ENCODE measurements at regions of chr3 and their contacts with region 1.

Region 1: GRCh38 chr3:4826237-4827100 is 152.8 kb upstream of the BHLHE40 start:
- DNase-seq: peak; percentile 86 to 95 (median 88)
- ATAC-seq: peak; percentile 85 to 93 (median 89)
- H3K4me3 ChIP-seq: peak overlapping the region in 5 of 12 donors; percentile 3 to 16 (median 10)
- H3K27ac ChIP-seq: peak overlapping the region; percentile 71 to 93 (median 84)
- H3K4me1 ChIP-seq: peaks cover 7 to 76% (median 40%) of the 10 kb centered on the region in 12 donors
- H3K27me3 ChIP-seq: no peaks in the 10 kb centered on the region
- CTCF ChIP-seq: no peak
- POLR2A ChIP-seq: peak in 1 of 2 donors; percentile 54

Region 2: DNA sequence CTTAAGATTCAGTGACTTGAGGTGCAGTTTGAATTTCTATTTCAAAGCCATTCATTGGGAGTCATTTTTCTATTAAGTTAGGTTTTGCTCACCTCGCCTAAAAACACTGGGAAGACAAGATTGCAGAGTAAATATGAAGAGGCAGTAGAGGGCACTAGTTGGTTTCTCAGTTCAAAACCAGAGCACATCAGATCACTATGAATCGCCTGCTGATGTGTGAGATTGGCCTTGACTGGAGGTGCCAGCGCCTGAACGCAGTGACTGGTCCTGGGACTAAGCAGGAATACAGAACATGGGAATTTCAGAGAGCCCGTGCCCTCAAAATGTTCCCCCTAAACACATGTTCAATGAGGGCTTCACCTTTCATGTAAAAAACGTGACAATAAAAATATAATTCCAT is 104.4 kb before region 1 on chr3:
- intact Hi-C with region 1: loop called in 5 of 10 experiments (anchors 5 to 10 kb)
- DNase-seq: peak in 2 of 5 donors; percentile 56 to 60
- ATAC-seq: peak; percentile 59 to 83 (median 74)
- H3K4me3 ChIP-seq: no peak overlapping the region
- H3K27ac ChIP-seq: peak overlapping the region in 9 of 12 donors; percentile 12 to 73 (median 58)
- H3K4me1 ChIP-seq: peaks cover 0 to 66% (median 41%) of the 10 kb centered on the region in 12 donors
- H3K27me3 ChIP-seq: no peaks in the 10 kb centered on the region
- CTCF ChIP-seq: peak in 10 of 12 donors; percentile 37 to 62 (median 48)
- POLR2A ChIP-seq: no peak

Region 3: GRCh38 chr3:4741404-4742307 is 84.8 kb before region 1 on chr3:
- intact Hi-C with region 1: loop called in 2 of 10 experiments (anchors 5 kb)
- DNase-seq: peak in 4 of 5 donors; percentile 59 to 79 (median 72)
- ATAC-seq: peak; percentile 73 to 89 (median 88)
- H3K4me3 ChIP-seq: peak overlapping the region in 1 of 12 donors; percentile 24
- H3K27ac ChIP-seq: peak overlapping the region; percentile 59 to 97 (median 85)
- H3K4me1 ChIP-seq: peaks cover 9 to 77% (median 41%) of the 10 kb centered on the region in 12 donors
- H3K27me3 ChIP-seq: no peaks in the 10 kb centered on the region
- CTCF ChIP-seq: no peak
- POLR2A ChIP-seq: peak in 1 of 2 donors; percentile 21

Region 4: GRCh38 chr3:4772171-4772804 is 54.2 kb before region 1 on chr3:
- intact Hi-C with region 1: loop called in 1 of 10 experiments (anchors 5 kb)
- DNase-seq: peak; percentile 82 to 92 (median 84)
- ATAC-seq: peak; percentile 86 to 91 (median 89)
- H3K4me3 ChIP-seq: peak overlapping the region in 1 of 12 donors; percentile 18
- H3K27ac ChIP-seq: peak overlapping the region; percentile 51 to 92 (median 81)
- H3K4me1 ChIP-seq: peaks cover 8 to 44% (median 32%) of the 10 kb centered on the region in 12 donors
- H3K27me3 ChIP-seq: no peaks in the 10 kb centered on the region
- CTCF ChIP-seq: no peak
- POLR2A ChIP-seq: no peak

Region 5: DNA sequence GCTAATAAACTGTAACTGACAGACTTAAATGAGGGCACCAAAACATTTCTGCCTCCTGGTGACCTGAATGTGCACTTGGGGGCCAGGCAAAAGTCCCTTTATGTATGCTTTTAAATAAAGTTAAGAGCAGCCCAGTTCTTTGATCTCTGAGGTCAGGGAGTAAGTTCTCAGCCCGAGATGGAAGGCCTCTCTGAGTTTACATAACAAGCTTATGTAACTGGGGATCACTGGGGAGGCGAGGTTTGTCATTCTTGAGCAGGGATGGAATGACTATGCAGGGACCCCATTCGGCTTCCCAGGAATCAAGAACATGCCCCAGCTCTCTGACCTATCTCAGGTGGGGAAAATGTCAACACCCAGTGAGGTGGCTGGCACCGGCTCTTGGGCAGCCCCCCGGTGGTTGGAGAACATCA is 45.9 kb before region 1 on chr3:
- intact Hi-C with region 1: loop called in 1 of 10 experiments (anchors 5 kb)
- DNase-seq: no peak
- ATAC-seq: peak in 1 of 4 donors; percentile 47
- H3K4me3 ChIP-seq: no peak overlapping the region
- H3K27ac ChIP-seq: peak overlapping the region in 7 of 12 donors; percentile 3 to 69 (median 27)
- H3K4me1 ChIP-seq: peaks cover 0 to 35% (median 12%) of the 10 kb centered on the region in 12 donors
- H3K27me3 ChIP-seq: no peaks in the 10 kb centered on the region
- CTCF ChIP-seq: no peak
- POLR2A ChIP-seq: no peak

Region 6: GRCh38 chr3:5026331-5027218 is 200.1 kb after region 1 on chr3:
- intact Hi-C with region 1: loop called in 2 of 10 experiments (anchors 5 kb)
- DNase-seq: peak; percentile 92 to 96 (median 93)
- ATAC-seq: peak; percentile 90 to 96 (median 92)
- H3K4me3 ChIP-seq: peak overlapping the region; percentile 13 to 65 (median 56)
- H3K27ac ChIP-seq: peak overlapping the region; percentile 58 to 95 (median 81)
- H3K4me1 ChIP-seq: peaks cover 0 to 23% (median 8%) of the 10 kb centered on the region in 12 donors
- H3K27me3 ChIP-seq: no peaks in the 10 kb centered on the region
- CTCF ChIP-seq: peak; percentile 54 to 87 (median 66)
- POLR2A ChIP-seq: no peak

Region 7: DNA sequence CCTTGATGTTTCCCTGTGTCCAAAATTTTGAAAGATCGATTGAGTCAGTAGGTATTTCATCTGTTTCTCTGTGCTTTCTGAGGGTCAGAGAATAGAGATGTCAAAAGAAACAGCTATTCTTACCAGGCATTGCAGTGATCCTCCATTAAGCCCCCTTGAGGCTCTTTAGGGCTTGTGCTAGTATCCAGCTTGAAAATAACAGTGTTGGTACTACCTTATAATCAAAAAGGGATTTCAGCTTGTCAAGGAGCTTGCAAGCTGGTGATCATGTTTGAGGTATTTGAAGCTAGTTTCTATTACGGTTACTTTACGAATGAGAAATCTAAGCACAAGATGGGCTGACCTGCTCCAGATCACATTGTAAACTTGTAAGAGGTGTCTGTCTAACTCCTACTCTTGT is 464.4 kb after region 1 on chr3:
- intact Hi-C with region 1: no loop called
- DNase-seq: no peak
- ATAC-seq: no peak
- H3K4me3 ChIP-seq: no peak overlapping the region
- H3K27ac ChIP-seq: no peak overlapping the region
- H3K4me1 ChIP-seq: peaks cover 0 to 4% (median 0%) of the 10 kb centered on the region in 12 donors
- H3K27me3 ChIP-seq: no peaks in the 10 kb centered on the region
- CTCF ChIP-seq: no peak
- POLR2A ChIP-seq: no peak